IMR-90 (cell line): ENCODE measurements at regions of chr7 and their contacts with region 1.

Region 1: GRCh38 chr7:2354186-2354938 is at the start of gene EIF3B:
- DNase-seq: peak; percentile 94
- ATAC-seq: peak; percentile 85
- H3K4me3 ChIP-seq: peak within 1 kb of the TSS; percentile 55
- H3K27ac ChIP-seq: peak within 1 kb of the TSS; percentile 96
- H3K4me1 ChIP-seq: peaks cover 3% of the 10 kb centered on the region
- H3K27me3 ChIP-seq: no peaks in the 10 kb centered on the region
- CTCF ChIP-seq: no peak
- POLR2A ChIP-seq: peak; percentile 95
- RAD21 ChIP-seq: no peak
- total RNA-seq, gene EIF3B: 201 and 211 TPM in 2 replicates

Region 2: DNA sequence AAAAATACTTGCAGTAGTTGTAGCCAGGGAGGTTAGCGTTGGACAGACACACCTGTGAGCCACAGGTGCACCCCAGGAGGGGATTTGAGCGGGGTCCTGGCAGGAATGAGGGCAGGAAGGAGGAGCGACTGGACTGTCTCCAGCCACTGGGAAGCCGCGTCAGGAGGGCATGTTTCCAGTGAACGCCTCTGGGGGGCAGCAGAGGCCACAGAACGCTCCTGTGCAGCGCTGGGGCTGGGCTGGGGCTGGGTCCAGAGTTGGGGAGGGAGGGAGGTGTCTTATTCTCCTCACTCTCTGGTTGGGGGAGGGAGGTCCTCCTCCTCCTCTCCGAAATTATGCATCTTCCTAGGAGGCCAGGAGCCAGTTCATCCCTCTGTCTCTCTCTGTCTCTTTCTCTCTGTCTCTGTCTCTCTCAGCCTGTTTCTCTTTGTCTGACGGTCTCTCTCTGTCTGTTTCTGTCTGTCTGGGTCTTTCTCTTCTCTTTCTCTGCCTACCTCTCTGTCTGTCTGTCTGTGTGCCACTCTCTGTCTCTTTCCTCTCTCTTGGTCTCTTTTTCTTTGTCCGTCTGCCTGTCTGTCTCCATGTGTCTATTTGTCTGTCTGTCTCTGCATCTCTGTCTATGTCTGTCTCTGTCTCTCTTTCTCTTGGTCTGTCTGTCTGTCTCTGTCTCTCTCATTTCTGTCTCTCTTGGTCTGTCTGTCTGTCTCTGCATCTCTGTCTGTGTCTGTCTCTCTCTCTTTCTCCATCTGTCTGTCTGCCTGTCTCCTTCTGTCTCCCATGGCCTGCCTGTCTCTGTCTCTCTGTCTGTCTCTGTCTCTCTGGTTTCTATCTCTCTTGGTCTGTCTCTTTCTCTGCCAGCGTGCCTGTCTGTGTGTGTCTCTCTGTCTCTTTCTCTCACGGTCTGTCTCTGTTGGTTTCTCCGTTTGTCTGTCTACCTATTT is 774.6 kb before region 1 on chr7:
- CTCF ChIA-PET with region 1: no interaction called
- POLR2A ChIA-PET with region 1: no interaction called
- dilution Hi-C with region 1: no loop called
- in situ Hi-C with region 1: loop called (anchors 10 kb)
- intact Hi-C with region 1: no loop called
- DNase-seq: peak; percentile 32
- ATAC-seq: peak; percentile 99
- H3K4me3 ChIP-seq: no peak overlapping the region
- H3K27ac ChIP-seq: no peak overlapping the region
- H3K4me1 ChIP-seq: no peaks in the 10 kb centered on the region
- H3K27me3 ChIP-seq: no peaks in the 10 kb centered on the region
- CTCF ChIP-seq: peak; percentile 82
- POLR2A ChIP-seq: no peak
- RAD21 ChIP-seq: peak; percentile 91

Region 3: DNA sequence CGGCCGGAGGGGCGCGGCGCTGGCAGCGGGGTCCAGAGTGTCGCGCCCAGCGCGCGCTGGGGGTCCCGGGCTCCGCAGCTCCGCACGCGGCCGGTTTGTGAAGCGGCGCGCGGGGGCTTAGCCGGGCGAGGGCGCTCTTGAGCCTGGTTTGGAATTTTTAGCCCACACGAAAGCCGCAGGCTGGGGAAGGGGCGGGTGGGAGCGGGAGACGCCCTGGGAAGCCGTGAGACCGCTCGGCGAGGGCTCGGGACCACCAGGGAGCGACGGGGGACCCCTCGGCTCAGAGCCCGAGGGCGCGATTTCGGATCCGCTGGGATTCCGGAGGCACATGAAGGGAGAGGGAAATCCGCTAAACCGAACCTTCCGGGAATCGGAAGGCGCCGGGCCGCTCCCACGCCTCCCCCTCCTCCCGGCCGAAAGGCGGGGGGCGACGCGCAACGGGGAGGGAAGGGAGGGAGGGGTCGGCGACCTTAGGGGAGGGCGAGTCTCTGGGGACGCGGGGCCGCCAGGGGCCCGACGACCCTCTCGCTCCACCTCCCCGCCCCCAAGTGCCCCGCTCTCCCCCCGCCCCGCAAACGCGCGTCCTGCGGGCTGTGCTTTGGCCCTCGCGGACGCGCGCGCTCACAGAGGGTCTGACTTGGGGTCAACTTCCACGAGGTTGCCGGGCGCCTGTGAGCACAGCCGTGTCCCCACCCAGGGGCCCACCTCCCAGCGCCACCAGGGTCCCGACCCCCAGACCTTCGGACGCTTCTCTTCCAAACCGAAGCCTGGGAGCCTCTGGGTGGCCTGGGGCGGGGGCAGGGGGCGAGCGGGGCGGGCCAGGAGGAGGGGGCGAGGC is 689.4 kb before region 1 on chr7:
- CTCF ChIA-PET with region 1: no interaction called
- POLR2A ChIA-PET with region 1: no interaction called
- dilution Hi-C with region 1: no loop called
- in situ Hi-C with region 1: no loop called
- intact Hi-C with region 1: loop called (anchors 2 kb)
- DNase-seq: peak; percentile 41
- ATAC-seq: peak; percentile 50
- H3K4me3 ChIP-seq: peak overlapping the region; percentile 91
- H3K27ac ChIP-seq: no peak overlapping the region; the same call in 1 of the 2 replicates
- H3K4me1 ChIP-seq: peaks cover 2% of the 10 kb centered on the region; the same call in 1 of the 2 replicates
- H3K27me3 ChIP-seq: peaks cover 64% of the 10 kb centered on the region
- CTCF ChIP-seq: peak; percentile 94
- POLR2A ChIP-seq: no peak
- RAD21 ChIP-seq: peak; percentile 73

Region 4: DNA sequence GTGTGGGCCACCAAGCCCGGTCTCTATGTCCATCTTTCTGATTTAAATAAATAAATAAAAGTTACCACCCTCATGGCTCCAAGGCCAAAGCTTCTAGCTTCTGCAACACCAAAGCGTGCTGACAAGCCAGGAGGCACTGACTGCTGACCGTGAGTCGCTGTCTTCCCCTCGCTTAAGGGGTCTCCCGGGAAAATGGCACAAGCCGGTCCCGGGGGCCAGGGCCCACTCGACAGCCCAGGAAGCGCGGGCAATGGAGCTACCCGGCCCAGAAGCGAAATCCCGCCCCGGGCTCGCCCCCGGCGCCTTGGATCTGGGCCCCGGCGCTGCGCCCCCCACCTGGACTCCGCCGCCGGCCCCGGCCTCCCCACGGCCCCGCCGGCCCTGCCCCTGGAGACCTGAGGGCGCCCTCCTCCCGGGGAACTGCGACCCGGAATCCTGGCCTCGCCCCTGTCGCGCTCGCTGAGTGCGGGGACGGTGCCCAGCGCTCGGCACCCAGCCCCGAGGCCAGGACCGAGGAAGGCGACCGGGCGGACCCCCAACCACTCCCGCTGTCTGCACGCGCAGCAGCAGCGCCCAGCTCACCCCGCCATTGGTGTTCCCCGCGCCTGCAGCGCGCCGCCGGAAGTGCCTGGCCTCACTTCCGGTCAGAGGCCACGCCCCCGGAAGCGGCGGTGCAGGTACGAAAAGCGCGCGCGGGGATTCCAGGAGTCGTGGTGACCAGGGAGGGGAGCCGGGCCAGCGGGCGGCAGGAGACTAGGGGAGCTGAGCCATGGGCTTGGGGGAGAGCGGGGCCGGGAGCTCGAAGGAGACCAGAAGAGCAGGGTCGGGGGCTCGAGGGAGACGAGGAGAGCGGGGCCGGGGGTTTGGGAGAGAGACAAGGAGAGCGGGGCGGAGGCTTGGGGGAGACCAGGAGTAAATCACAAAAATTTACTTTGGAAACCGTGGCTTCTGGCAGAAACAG is 112.5 kb before region 1 on chr7 and contains the starts of genes MRM2 and NUDT1:
- CTCF ChIA-PET with region 1: no interaction called
- POLR2A ChIA-PET with region 1: no interaction called
- dilution Hi-C with region 1: no loop called
- in situ Hi-C with region 1: loop called (anchors 5 kb)
- intact Hi-C with region 1: no loop called
- DNase-seq: peak; percentile 62
- ATAC-seq: peak; percentile 89
- H3K4me3 ChIP-seq: peak within 1 kb of the TSS; percentile 98
- H3K27ac ChIP-seq: peak within 1 kb of the TSS; percentile 91
- H3K4me1 ChIP-seq: peaks cover 3% of the 10 kb centered on the region
- H3K27me3 ChIP-seq: no peaks in the 10 kb centered on the region
- CTCF ChIP-seq: no peak
- POLR2A ChIP-seq: peak; percentile 36; the same call in 1 of the 2 replicates
- RAD21 ChIP-seq: no peak
- total RNA-seq, gene MRM2: 23.1 and 23.8 TPM in 2 replicates
- total RNA-seq, gene NUDT1: 36.1 and 49.1 TPM in 2 replicates

Region 5: GRCh38 chr7:2420216-2420933 is 66.0 kb after region 1 on chr7:
- CTCF ChIA-PET with region 1: no interaction called
- POLR2A ChIA-PET with region 1: no interaction called
- dilution Hi-C with region 1: no loop called
- in situ Hi-C with region 1: no loop called
- intact Hi-C with region 1: no loop called
- DNase-seq: no peak
- ATAC-seq: no peak
- H3K4me3 ChIP-seq: no peak overlapping the region
- H3K27ac ChIP-seq: no peak overlapping the region
- H3K4me1 ChIP-seq: peaks cover 3% of the 10 kb centered on the region; the same call in 1 of the 2 replicates
- H3K27me3 ChIP-seq: no peaks in the 10 kb centered on the region
- CTCF ChIP-seq: no peak
- POLR2A ChIP-seq: no peak
- RAD21 ChIP-seq: no peak